Ovary (tissue), 10 donors: ENCODE measurements at regions of chr10 and their contacts with region 1.

Region 1: GRCh38 chr10:21292763-21293517 is 232.5 kb downstream of the SKIDA1 start:
- DNase-seq: peak; percentile 54 to 69 (median 63)
- H3K4me3 ChIP-seq: no peak overlapping the region
- H3K27ac ChIP-seq: no peak overlapping the region
- H3K4me1 ChIP-seq: peaks cover 6% of the 10 kb centered on the region
- H3K27me3 ChIP-seq: no peaks in the 10 kb centered on the region
- CTCF ChIP-seq: no peak
- EP300 ChIP-seq: no peak
- POLR2A ChIP-seq: no peak

Region 2: DNA sequence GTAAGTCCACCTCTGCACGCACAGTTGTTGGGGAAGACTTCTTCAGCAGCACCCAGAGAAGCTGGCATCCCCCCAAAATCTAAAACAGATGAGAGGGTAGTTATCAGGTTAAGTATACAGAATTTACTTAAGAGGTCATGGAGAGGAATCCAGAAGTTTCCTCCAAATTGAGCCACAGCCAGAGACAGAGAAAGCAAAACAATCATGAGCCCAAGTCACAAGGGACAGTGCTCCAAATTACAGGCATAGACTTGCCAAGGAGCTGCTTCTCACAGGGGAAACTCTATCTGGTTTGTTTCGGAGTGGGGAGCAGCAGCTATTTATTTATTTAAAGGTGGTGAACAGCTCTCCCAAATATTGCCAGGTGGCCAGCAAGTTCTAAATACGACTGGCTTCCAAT is 75.8 kb before region 1 on chr10:
- intact Hi-C with region 1: no loop called
- DNase-seq: no peak
- H3K4me3 ChIP-seq: no peak overlapping the region
- H3K27ac ChIP-seq: no peak overlapping the region
- H3K4me1 ChIP-seq: no peaks in the 10 kb centered on the region
- H3K27me3 ChIP-seq: no peaks in the 10 kb centered on the region
- CTCF ChIP-seq: no peak
- EP300 ChIP-seq: no peak
- POLR2A ChIP-seq: no peak

Region 3: GRCh38 chr10:21355561-21356011 is 62.6 kb after region 1 on chr10:
- intact Hi-C with region 1: no loop called
- DNase-seq: no peak
- H3K4me3 ChIP-seq: no peak overlapping the region
- H3K27ac ChIP-seq: no peak overlapping the region
- H3K4me1 ChIP-seq: no peaks in the 10 kb centered on the region
- H3K27me3 ChIP-seq: no peaks in the 10 kb centered on the region
- CTCF ChIP-seq: no peak
- EP300 ChIP-seq: no peak
- POLR2A ChIP-seq: no peak

Region 4: DNA sequence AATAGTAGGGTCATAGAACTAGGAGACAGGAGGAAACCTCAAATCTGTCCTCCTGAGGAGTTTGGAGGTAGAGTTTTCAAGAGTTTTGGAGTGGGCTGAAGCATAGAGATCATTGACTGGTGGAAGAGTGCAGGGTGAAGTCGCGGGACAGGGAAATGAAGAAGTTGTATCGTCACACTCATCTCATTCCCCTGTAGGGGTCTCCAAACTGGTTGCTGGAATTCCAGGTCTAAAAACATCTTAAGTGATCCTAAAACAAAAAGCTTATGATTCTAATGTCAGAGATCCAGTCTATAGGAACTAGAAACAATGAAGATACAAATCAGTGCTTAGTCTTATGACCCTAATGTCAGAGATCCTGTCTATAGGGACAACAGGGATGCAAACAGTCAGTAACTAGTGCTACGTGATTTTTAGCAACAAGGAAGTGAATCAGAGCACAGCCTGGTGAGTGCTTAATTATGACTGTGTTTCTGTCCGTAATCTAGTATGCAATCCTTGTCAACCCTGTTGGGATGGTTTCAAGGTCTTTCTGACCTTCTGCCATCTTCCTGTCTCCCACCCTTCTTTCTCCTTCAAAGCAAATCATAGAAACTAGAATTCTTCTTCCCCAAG is 93.2 kb after region 1 on chr10:
- intact Hi-C with region 1: loop called in 1 of 4 experiments (anchors 10 kb)
- DNase-seq: no peak
- H3K4me3 ChIP-seq: no peak overlapping the region
- H3K27ac ChIP-seq: no peak overlapping the region
- H3K4me1 ChIP-seq: no peaks in the 10 kb centered on the region
- H3K27me3 ChIP-seq: no peaks in the 10 kb centered on the region
- CTCF ChIP-seq: no peak
- EP300 ChIP-seq: no peak
- POLR2A ChIP-seq: no peak